ENCODE measurements at regions of chr20 and their contacts with region 1.

Region 1: GRCh38 chr20:3767427-3768341 is at the start of gene ADISSP:
- DNase-seq: peak; percentile 98
- H3K4me3 ChIP-seq: peak within 1 kb of the TSS; percentile 61 to 71 (median 61)
- H3K27ac ChIP-seq: peak within 1 kb of the TSS; percentile 55
- H3K4me1 ChIP-seq: peaks cover 25% of the 10 kb centered on the region
- H3K27me3 ChIP-seq: no peaks in the 10 kb centered on the region
- CTCF ChIP-seq: no peak
- POLR2A ChIP-seq: peak; percentile 72
- total RNA-seq, gene ADISSP: 55.0 and 55.8 TPM in 2 replicates

Region 2: GRCh38 chr20:3407771-3408637 is 359.7 kb before region 1 on chr20:
- CTCF ChIA-PET with region 1: no interaction called
- POLR2A ChIA-PET with region 1: no interaction called
- dilution Hi-C with region 1: no loop called
- intact Hi-C with region 1: loop called (anchors 5 kb)
- DNase-seq: peak; percentile 78
- H3K4me3 ChIP-seq: peak overlapping the region; percentile 78 to 89 (median 84)
- H3K27ac ChIP-seq: peak overlapping the region; percentile 20
- H3K4me1 ChIP-seq: peaks cover 27% of the 10 kb centered on the region
- H3K27me3 ChIP-seq: peaks cover 0 to 7% of the 10 kb centered on the region in 2 experiments
- CTCF ChIP-seq: no peak
- POLR2A ChIP-seq: peak; percentile 73

Region 3: GRCh38 chr20:3606021-3606420 is 161.7 kb before region 1 on chr20:
- CTCF ChIA-PET with region 1: no interaction called
- POLR2A ChIA-PET with region 1: no interaction called
- dilution Hi-C with region 1: no loop called
- intact Hi-C with region 1: no loop called
- DNase-seq: no peak
- H3K4me3 ChIP-seq: no peak overlapping the region
- H3K27ac ChIP-seq: no peak overlapping the region
- H3K4me1 ChIP-seq: no peaks in the 10 kb centered on the region
- H3K27me3 ChIP-seq: no peaks in the 10 kb centered on the region
- CTCF ChIP-seq: no peak
- POLR2A ChIP-seq: no peak

Region 4: DNA sequence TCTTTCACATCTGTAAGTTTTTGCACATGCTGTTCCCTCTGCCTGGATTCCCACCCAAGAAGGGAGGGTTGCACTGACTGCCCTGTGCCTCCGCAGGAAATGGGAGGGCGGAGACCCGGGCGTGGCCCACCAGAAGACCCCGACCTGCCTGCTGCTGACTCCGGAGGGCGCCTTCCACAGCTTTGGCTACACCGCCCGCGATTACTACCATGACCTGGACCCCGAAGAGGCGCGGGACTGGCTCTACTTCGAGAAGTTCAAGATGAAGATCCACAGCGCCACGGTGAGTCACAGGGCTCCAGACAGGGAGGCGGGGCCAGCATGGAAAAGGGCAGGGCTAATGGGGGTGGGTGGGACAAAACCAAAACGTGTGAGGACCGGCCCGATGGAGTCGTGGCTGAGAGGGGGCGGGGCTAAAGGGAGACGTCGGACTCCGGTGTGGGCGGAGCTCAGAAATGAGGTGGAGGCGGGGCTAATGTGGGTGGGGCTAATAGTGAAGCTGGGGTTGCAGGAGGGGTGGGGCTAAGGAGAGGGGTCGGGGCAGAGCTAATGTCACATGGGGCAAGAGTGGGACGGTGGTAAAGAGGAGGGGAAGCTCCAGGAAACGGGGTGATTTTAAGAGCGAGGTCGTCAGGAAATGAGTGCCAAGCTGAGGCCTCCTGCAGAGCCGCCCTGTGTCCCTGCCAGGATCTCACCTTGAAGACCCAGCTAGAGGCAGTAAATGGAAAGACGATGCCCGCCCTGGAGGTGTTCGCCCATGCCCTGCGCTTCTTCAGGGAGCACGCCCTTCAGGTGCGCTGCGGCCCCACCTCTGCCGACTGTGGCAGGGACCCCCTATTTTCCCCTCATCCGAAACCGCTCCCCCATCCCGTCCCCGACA is 22.6 kb before region 1 on chr20:
- CTCF ChIA-PET with region 1: interaction called, 10 read pairs
- POLR2A ChIA-PET with region 1: interaction called, 3 read pairs
- dilution Hi-C with region 1: no loop called
- intact Hi-C with region 1: no loop called
- DNase-seq: peak; percentile 73
- H3K4me3 ChIP-seq: no peak overlapping the region
- H3K27ac ChIP-seq: no peak overlapping the region
- H3K4me1 ChIP-seq: no peaks in the 10 kb centered on the region
- H3K27me3 ChIP-seq: no peaks in the 10 kb centered on the region
- CTCF ChIP-seq: no peak
- POLR2A ChIP-seq: no peak

Region 5: DNA sequence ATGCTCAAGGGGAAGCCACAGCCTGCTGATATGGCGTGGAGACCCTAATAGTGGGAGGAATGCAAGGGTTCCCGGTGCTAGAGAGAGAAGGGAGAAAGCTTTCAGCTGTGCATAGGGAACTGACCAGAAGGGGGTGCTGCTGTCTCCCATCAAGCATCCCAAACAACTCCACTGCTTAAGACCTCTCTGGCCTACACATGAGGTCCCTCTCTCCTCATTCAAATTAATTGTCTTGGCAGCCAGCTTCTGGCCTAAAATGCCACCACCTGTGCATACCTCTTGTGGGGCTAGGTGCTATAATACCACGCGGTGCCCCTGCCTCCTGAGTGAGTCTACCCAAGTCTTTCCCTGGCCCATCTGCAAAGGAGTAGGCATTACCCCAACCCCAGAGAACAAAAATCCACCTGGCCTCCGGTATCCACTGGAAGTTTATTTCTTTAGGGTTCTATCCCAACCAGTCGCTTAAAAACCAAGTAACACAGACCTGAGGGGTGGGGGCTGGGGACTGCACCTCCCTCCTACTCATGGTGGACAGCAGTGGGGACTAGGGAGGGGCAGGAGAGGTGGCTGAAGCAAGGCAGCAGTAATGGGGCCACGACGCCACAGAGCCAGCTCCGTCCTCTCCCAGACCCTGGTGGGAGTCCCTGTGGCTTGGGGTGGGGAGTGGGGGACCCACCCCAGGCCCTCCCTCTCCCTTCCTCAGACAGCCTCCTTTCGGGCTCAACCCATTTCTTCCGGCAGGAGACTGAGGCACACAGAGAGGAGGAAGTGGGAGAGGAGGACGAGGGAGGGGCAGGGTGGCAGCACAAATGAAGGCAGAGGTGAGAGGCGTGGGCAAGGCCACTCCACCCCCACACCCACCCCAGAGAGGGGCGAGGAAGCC is 14.3 kb before region 1 on chr20:
- CTCF ChIA-PET with region 1: interaction called, 76 read pairs
- POLR2A ChIA-PET with region 1: no interaction called
- dilution Hi-C with region 1: no loop called
- intact Hi-C with region 1: loop called (anchors 1 kb)
- DNase-seq: peak; percentile 66
- H3K4me3 ChIP-seq: no peak overlapping the region
- H3K27ac ChIP-seq: no peak overlapping the region
- H3K4me1 ChIP-seq: no peaks in the 10 kb centered on the region
- H3K27me3 ChIP-seq: no peaks in the 10 kb centered on the region
- CTCF ChIP-seq: peak; percentile 79 to 89
- POLR2A ChIP-seq: peak; percentile 55

Region 6: GRCh38 chr20:3781153-3781910 is 13.6 kb after region 1 on chr20 and contains the start of gene SPEF1:
- CTCF ChIA-PET with region 1: interaction called, 34 read pairs
- POLR2A ChIA-PET with region 1: interaction called, 4 read pairs
- dilution Hi-C with region 1: no loop called
- intact Hi-C with region 1: loop called (anchors 1 kb)
- DNase-seq: peak; percentile 90
- H3K4me3 ChIP-seq: peak within 1 kb of the TSS in 2 of 3 experiments; percentile 3 to 17
- H3K27ac ChIP-seq: no peak within 1 kb of the TSS
- H3K4me1 ChIP-seq: peaks cover 28% of the 10 kb centered on the region
- H3K27me3 ChIP-seq: peaks cover 8 to 19% of the 10 kb centered on the region in 2 experiments
- CTCF ChIP-seq: peak; percentile 42 to 56
- POLR2A ChIP-seq: peak; percentile 68
- total RNA-seq, gene SPEF1: 0.32 and 0.44 TPM in 2 replicates

Region 7: DNA sequence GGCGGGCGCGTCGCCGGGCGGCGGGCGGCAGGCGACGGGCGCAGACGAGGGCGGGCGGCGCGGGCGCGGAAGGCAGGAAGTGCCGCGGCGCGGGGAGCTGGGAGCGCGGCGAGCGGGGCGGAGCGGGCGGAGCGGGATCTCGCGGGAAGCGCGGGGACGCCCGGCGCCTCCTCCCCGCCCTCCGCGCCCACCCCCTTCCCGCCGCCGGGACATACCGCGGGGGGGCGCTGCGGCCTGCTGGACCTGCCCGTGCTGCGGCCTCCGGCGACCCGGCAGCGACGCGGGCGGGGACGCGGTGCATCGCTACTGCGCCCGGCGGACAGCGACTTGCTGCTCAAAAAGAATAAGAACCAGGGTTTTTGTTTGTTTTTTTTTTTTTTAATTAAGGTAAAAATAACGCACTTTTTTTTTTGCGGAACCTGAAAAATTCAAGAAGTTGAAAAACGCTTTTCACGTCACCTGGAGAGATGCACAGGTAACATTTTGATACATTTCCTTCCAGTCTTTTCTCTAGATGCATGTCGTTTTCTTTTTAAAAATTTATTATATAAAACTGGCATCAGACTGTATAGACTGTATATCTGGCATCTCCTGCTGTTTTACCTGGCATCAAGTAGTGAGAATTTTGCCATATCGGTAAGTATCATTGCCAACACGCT is 19.1 kb after region 1 on chr20 and contains the start of gene CENPB:
- CTCF ChIA-PET with region 1: interaction called, 29 read pairs
- POLR2A ChIA-PET with region 1: interaction called, 4 read pairs
- dilution Hi-C with region 1: no loop called
- intact Hi-C with region 1: loop called (anchors 1 kb)
- DNase-seq: peak; percentile 83
- H3K4me3 ChIP-seq: peak within 1 kb of the TSS; percentile 30 to 62 (median 58)
- H3K27ac ChIP-seq: peak within 1 kb of the TSS; percentile 0
- H3K4me1 ChIP-seq: peaks cover 18% of the 10 kb centered on the region
- H3K27me3 ChIP-seq: no peaks in the 10 kb centered on the region
- CTCF ChIP-seq: peak; percentile 56 to 62
- POLR2A ChIP-seq: no peak
- total RNA-seq, gene CENPB: 82.2 and 90.3 TPM in 2 replicates